Colonic mucosa (tissue), 4 donors: ENCODE measurements at regions of chr14 and their contacts with region 1.

Region 1: DNA sequence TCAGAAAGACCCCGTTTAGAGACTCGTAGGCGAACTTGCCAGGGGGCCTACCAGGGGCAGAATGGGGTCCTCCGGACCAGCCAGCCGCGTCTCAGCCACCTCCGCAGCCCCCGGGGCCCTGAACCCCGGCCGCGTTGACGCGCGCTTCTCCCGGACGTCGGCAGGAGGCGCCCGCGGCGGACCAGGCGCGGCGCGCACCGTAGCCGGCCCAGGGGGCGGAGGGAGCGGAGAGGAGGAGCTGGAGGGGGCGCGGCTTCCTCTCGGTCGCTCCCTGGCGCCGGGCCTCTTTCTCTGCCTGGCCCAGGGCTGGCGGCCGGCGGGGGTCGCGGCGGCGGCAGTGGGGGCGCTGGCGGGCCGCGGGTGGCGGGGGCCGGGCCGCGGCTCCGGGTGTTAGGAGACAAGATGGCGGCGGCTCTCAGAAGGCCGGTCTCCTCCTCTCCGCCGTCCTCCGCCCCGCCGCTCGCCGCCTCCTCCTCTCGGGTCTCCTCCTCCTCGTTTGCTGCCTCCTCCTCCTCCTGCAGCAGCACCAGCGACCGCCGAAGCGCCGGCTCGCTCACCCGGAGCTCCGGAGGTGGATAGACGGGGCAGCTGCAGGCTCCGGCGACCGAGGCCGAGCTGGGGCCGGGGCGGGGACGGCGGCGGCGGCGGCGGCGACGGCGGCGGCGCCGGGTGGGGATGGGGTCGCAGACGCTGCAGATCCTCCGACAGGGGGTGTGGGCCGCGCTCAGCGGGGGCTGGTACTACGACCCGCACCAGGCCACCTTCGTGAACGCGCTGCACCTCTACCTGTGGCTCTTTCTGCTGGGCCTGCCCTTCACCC is at the start of gene PCNX1:
- DNase-seq: peak; percentile 87
- H3K4me3 ChIP-seq: peak within 1 kb of the TSS; percentile 86
- H3K27ac ChIP-seq: peak within 1 kb of the TSS; percentile 94
- H3K4me1 ChIP-seq: peaks cover 4% of the 10 kb centered on the region
- H3K27me3 ChIP-seq: no peaks in the 10 kb centered on the region
- CTCF ChIP-seq: peak; percentile 91
- total RNA-seq, gene PCNX1: 18.1 to 26.7 TPM

Region 2: GRCh38 chr14:70821584-70822529 is 85.5 kb before region 1 on chr14:
- intact Hi-C with region 1: loop called (anchors 10 kb)
- DNase-seq: peak; percentile 45
- H3K4me3 ChIP-seq: peak overlapping the region; percentile 39
- H3K27ac ChIP-seq: no peak overlapping the region
- H3K4me1 ChIP-seq: peaks cover 8% of the 10 kb centered on the region
- H3K27me3 ChIP-seq: peaks cover 12% of the 10 kb centered on the region
- CTCF ChIP-seq: no peak